Left lung (tissue), 14 donors: ENCODE measurements at regions of chr3 and their contacts with region 1.

Region 1: DNA sequence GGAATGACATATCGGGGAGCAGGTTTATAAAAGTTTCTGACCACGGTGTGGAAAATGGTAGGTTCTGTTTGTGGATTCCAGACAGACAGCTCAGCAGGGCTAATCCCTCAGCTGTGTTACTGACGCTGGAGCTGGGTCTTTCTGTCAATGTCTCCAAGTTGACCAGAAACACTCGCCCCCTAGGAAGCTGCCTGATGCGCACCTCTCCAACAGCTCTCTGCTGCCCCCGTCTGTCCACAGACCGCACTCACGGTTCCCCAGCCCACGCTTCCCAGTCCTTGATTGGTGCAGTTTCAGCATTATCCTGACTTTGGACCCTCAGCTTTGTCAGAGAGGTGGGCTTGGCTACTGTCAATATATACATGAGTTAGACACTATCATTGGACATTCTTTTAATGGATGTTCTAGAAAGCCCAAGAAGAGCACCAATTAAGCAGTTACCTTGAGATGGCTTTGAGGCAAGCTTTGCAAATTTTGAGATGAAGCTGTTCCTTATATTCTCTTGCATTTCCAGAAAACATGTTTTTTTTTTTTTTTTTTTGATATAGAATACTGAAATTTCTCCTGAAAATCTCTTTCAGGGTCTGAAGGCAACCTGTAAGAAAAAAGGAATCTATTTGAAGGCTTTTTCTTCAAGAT is 98.9 kb upstream of the TBC1D5 start:
- DNase-seq: peak; percentile 56 to 92 (median 67)
- ATAC-seq: peak; percentile 98
- H3K4me3 ChIP-seq: no peak overlapping the region
- H3K27ac ChIP-seq: no peak overlapping the region
- H3K4me1 ChIP-seq: no peaks in the 10 kb centered on the region
- H3K27me3 ChIP-seq: no peaks in the 10 kb centered on the region
- CTCF ChIP-seq: peak; percentile 91 to 92

Region 2: DNA sequence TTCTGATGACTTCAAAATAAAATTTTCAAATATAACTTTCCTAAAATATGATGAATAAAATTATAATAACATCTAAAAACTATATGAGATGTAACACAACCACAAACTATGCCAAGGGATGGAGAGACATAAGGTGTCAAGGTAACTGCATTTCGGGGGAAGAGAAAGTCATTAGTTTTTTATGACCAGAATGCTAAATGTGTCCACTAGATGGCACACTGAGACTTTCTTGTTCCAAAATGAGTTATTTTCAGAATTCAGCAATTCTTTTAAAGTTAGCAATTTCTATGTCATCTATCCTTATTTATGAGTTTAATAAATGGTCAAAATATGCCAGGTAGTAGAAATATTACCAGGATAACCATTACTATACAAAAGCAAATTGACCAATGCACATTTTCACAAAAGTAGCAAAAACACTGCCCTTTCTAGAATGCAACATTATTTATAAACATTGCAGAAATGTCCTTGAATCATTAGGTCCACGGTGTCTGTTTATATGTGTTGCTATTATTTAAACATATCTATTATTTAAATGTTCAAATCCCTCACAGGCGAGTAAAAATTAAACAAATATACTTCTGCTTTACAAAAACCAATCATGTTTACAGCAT is 582.4 kb before region 1 on chr3:
- intact Hi-C with region 1: loop called in 1 of 2 experiments (anchors 10 kb)
- DNase-seq: peak in 2 of 4 donors; percentile 28 to 41
- ATAC-seq: peak; percentile 50
- H3K4me3 ChIP-seq: no peak overlapping the region
- H3K27ac ChIP-seq: no peak overlapping the region
- H3K4me1 ChIP-seq: no peaks in the 10 kb centered on the region
- H3K27me3 ChIP-seq: no peaks in the 10 kb centered on the region
- CTCF ChIP-seq: peak; percentile 60 to 76